A549 (cell line): ENCODE measurements at regions of chr1 and their contacts with region 1.

Region 1: DNA sequence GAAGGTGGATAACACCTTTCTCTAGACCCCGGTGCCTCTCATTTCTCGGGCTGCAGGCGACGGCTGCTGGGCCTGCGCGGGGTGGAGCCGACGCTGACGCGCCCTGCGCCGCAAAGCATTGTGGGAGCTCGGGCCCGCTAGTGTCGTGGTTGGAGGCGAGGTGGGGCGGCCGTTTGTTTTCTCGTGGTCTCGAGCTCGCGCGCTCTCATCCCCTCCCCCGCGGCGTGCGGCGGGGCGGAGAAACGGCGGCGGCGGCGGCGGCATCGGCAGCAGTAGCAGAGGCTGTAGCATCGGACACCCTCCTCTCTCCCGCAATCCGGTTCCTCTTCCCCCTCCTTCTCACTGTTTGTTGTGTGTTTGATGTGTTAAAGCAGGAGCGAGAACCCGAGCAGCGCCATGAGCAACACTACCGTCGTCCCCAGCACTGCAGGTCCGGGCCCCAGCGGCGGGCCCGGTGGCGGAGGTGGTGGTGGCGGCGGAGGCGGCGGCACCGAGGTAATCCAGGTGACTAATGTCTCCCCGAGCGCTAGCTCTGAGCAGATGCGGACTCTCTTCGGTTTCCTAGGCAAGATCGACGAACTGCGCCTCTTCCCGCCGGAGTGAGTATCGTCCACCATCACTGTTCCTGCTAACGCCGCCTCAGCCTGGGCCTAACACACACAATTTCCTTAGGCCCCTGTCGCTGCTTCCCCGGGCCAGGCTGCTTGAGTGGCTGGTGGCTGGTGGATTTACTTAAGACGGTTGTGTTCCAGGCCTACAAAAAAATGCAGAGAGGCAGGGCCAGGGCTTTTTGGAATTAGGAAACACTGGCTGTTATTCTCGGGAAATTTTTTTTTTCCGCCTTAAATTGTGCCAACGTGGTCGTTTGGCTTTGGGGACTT is at the start of gene SRSF11:
- DNase-seq: peak; percentile 66 to 92
- ATAC-seq: peak; percentile 94 to 98
- H3K4me3 ChIP-seq: peak within 1 kb of the TSS; percentile 69
- H3K27ac ChIP-seq: peak within 1 kb of the TSS; percentile 91 to 93
- H3K4me1 ChIP-seq: peaks cover 36% of the 10 kb centered on the region
- CTCF ChIP-seq: no peak
- EP300 ChIP-seq: no peak
- POLR2A ChIP-seq: peak; percentile 41
- RAD21 ChIP-seq: no peak
- polyA plus RNA-seq, gene SRSF11: 172 and 202 TPM in 2 replicates

Region 2: DNA sequence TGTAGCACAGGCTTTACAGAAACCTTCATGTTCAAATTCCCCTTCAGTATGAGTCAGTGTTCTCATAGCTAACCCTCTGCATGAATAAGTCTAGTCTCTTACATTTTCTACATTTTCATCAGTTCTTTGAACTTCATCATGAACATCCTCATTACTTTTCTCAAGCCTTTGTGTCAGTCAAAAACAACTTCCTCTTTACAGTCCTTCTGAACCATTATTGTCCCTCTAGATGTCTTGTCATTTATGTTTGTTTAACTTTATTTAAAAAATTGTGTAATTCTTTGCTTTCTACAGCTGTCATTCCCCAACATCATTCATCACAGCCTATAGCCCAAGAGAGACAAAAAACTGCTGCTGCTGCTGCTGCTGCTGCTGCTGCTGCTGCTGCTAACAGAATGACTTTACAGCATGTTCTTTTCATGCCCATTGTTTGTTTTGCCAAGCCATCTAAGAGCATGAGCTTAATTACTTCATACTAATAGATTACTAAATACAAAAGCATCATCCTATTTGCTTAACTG is 149.2 kb before region 1 on chr1:
- CTCF ChIA-PET with region 1: no interaction called
- POLR2A ChIA-PET with region 1: no interaction called
- DNase-seq: no peak
- ATAC-seq: no peak
- H3K4me3 ChIP-seq: no peak overlapping the region
- H3K27ac ChIP-seq: no peak overlapping the region
- H3K4me1 ChIP-seq: no peaks in the 10 kb centered on the region
- CTCF ChIP-seq: no peak
- EP300 ChIP-seq: no peak
- POLR2A ChIP-seq: no peak
- RAD21 ChIP-seq: no peak

Region 3: DNA sequence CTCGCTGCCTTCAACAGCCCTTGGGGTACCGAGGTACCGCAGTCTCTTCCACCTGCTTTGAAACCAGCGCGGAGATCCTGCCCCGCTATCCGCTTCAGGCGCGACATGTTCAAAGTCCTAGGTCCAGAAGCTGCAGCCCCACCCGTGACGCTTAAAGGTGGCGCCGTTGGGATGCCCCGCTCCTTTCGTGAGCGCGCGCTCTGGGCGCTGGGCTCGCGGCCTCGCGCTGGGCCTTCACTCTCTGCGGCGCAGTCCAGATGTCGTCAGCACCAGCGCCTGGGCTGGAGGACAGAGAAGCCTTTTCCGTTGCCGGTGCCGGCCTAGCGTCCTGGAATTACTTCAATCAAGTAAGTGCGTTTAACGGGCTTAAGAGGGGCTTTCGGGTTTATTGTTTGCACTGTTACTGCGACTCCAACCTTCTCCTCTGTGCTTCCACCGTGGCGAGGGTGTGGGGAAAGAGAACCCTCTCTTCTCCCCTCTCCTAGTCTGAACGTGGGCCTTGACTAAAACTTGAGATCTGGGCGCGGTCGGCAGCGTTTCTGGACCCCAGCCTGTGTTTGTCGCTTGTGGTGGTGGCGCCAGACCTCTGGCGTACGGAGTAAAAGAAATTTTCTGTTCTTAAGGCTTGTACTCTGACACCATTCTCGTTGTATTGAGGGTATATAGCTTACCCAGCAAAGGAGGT is 15.9 kb before region 1 on chr1 and contains the start of gene LRRC40:
- CTCF ChIA-PET with region 1: interaction called, 5 read pairs
- POLR2A ChIA-PET with region 1: interaction called, 15 read pairs
- DNase-seq: peak; percentile 72 to 93
- ATAC-seq: peak; percentile 98 to 99
- H3K4me3 ChIP-seq: peak within 1 kb of the TSS; percentile 84
- H3K27ac ChIP-seq: peak within 1 kb of the TSS; percentile 86 to 97
- H3K4me1 ChIP-seq: peaks cover 13% of the 10 kb centered on the region; the same call in 2 of the 3 replicates
- CTCF ChIP-seq: no peak
- EP300 ChIP-seq: no peak
- POLR2A ChIP-seq: peak; percentile 57
- RAD21 ChIP-seq: no peak
- polyA plus RNA-seq, gene LRRC40: 16.3 and 25.3 TPM in 2 replicates

Region 4: GRCh38 chr1:70410604-70411359 is 189.3 kb after region 1 on chr1 and contains the start of gene CTH:
- CTCF ChIA-PET with region 1: no interaction called
- POLR2A ChIA-PET with region 1: interaction called, 10 read pairs
- DNase-seq: peak; percentile 87 to 96
- ATAC-seq: peak; percentile 99
- H3K4me3 ChIP-seq: peak within 1 kb of the TSS; percentile 57
- H3K27ac ChIP-seq: peak within 1 kb of the TSS; percentile 64 to 87
- H3K4me1 ChIP-seq: peaks cover 6% of the 10 kb centered on the region; the same call in 1 of the 3 replicates
- CTCF ChIP-seq: no peak
- EP300 ChIP-seq: no peak
- POLR2A ChIP-seq: peak; percentile 49
- RAD21 ChIP-seq: no peak
- polyA plus RNA-seq, gene CTH: 6.8 and 7.2 TPM in 2 replicates